Calu3 (cell line): ENCODE measurements at regions of chr11 and their contacts with region 1.

Region 1: GRCh38 chr11:114280696-114281095 is 15.5 kb upstream of the NNMT start:
- DNase-seq: peak; percentile 78
- H3K4me3 Mint-ChIP-seq: no peak overlapping the region
- H3K27ac Mint-ChIP-seq: peak overlapping the region; percentile 30
- H3K4me1 Mint-ChIP-seq: peaks cover 65% of the 10 kb centered on the region
- H3K27me3 Mint-ChIP-seq: peaks cover 5% of the 10 kb centered on the region
- CTCF ChIP-seq: peak; percentile 67

Region 2: GRCh38 chr11:114295676-114296604 is 15.2 kb after region 1 on chr11 and contains the start of gene NNMT:
- CTCF ChIA-PET with region 1: interaction called, 4 read pairs
- intact Hi-C with region 1: loop called (anchors 1 kb)
- DNase-seq: peak; percentile 65
- H3K4me3 Mint-ChIP-seq: peak within 1 kb of the TSS; percentile 74
- H3K27ac Mint-ChIP-seq: peak within 1 kb of the TSS; percentile 99
- H3K4me1 Mint-ChIP-seq: peaks cover 53% of the 10 kb centered on the region
- H3K27me3 Mint-ChIP-seq: no peaks in the 10 kb centered on the region
- CTCF ChIP-seq: no peak
- total RNA-seq, gene NNMT: 52.7 and 116 TPM in 2 replicates

Region 3: DNA sequence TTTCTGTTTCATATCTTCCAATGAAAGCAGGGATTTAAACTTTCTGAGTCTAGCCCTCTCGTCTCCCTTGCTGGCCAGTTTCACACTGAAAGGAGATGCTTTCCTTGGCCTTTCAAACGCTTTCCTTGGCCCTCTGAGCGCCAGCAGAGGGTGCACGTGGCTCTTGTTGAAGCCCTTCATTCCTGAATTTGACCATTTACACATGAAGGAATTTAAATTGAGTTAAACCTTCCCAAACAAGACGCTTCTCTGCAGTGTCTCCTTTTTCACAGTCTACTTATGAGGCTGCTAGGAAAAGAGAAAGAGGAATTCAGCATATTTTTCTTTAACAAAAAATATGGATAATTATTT is 37.1 kb after region 1 on chr11:
- CTCF ChIA-PET with region 1: no interaction called
- intact Hi-C with region 1: loop called (anchors 5 kb)
- DNase-seq: no peak
- H3K4me3 Mint-ChIP-seq: no peak overlapping the region
- H3K27ac Mint-ChIP-seq: no peak overlapping the region
- H3K4me1 Mint-ChIP-seq: peaks cover 22% of the 10 kb centered on the region
- H3K27me3 Mint-ChIP-seq: no peaks in the 10 kb centered on the region
- CTCF ChIP-seq: no peak

Region 4: GRCh38 chr11:114762408-114762807 is 481.7 kb after region 1 on chr11:
- CTCF ChIA-PET with region 1: no interaction called
- intact Hi-C with region 1: loop called (anchors 1 kb)
- DNase-seq: peak; percentile 44
- H3K4me3 Mint-ChIP-seq: no peak overlapping the region
- H3K27ac Mint-ChIP-seq: no peak overlapping the region
- H3K4me1 Mint-ChIP-seq: no peaks in the 10 kb centered on the region
- H3K27me3 Mint-ChIP-seq: peaks cover 11% of the 10 kb centered on the region
- CTCF ChIP-seq: no peak